ENCODE measurements at regions of chrX and their contacts with region 1.

Region 1: DNA sequence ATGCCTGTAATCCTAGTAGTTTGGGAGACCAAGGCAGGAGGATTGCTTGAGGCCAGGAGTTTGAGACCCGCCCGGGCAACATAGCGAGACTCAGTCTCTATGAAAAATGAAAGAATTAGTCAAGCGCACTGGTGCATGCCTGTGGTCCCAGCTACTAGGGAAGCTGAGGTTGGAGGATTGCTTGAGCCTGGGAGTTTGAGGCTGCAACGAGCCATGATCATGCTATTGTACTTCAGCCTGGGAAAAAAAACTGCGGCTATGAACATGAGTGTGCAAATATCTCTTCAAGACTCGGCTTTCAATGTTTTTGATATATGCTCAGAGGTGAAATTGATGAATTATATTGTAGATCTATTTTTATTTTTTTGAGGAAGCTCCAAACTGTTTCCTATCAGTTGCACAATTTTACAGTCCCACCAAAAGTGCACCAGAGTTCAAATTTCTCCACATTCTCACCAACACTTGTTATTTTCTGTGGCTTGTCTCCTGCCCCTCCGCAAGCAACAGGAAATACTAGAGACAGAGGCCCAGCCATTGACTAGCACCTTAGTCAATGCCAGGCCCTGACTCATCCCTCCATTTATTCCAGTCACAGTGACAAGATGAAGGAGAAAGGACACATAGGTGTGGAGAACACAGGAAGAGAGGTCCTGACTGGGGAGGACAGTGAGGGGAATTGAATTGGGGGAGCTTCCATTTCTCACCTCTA is 33.1 kb upstream of the ZNF41 start:
- DNase-seq: peak; percentile 62
- H3K4me3 ChIP-seq: no peak overlapping the region
- H3K27ac ChIP-seq: peak overlapping the region; percentile 7
- H3K4me1 ChIP-seq: peaks cover 7% of the 10 kb centered on the region
- H3K27me3 ChIP-seq: no peaks in the 10 kb centered on the region
- CTCF ChIP-seq: no peak

Region 2: GRCh38 chrX:47446431-47446830 is 69.7 kb before region 1 on chrX:
- CTCF ChIA-PET with region 1: no interaction called
- dilution Hi-C with region 1: no loop called
- in situ Hi-C with region 1: no loop called
- intact Hi-C with region 1: no loop called
- DNase-seq: no peak
- H3K4me3 ChIP-seq: no peak overlapping the region
- H3K27ac ChIP-seq: no peak overlapping the region
- H3K4me1 ChIP-seq: no peaks in the 10 kb centered on the region
- H3K27me3 ChIP-seq: no peaks in the 10 kb centered on the region
- CTCF ChIP-seq: no peak

Region 3: DNA sequence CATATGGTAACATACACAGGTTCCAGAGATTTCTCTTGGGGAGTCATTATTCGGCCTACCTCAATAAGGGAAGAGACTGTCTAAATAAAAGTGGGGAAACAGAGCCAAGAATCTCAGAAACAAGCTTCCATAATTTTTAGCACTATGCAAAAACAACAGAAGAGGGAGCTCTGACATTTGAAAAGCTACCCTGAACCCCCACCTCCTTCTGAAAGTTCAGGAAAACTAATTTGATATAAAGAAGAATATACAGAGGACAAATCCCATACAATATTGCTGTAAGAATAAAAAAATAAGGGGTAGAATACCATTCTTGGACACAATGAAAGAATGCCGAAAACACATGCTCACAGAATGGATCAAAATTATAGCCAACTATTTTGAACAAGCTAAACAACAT is 18.8 kb before region 1 on chrX:
- CTCF ChIA-PET with region 1: interaction called, 3 read pairs
- dilution Hi-C with region 1: no loop called
- in situ Hi-C with region 1: no loop called
- intact Hi-C with region 1: loop called (anchors 2 kb)
- DNase-seq: no peak
- H3K4me3 ChIP-seq: no peak overlapping the region
- H3K27ac ChIP-seq: no peak overlapping the region
- H3K4me1 ChIP-seq: peaks cover 6% of the 10 kb centered on the region
- H3K27me3 ChIP-seq: no peaks in the 10 kb centered on the region
- CTCF ChIP-seq: peak in 1 of 2 donors; percentile 49

Measured in mammary epithelial cell (primary cell).